HEK293 (cell line): ENCODE measurements at regions of chr9 and their contacts with region 1.

Region 1: GRCh38 chr9:8719833-8720486 is 920.4 kb upstream of the DMAC1 start:
- H3K4me3 ChIP-seq: no peak overlapping the region
- H3K27ac ChIP-seq: no peak overlapping the region
- H3K4me1 ChIP-seq: peaks cover 8% of the 10 kb centered on the region; the same call in 1 of the 2 replicates
- CTCF ChIP-seq: no peak

Region 2: DNA sequence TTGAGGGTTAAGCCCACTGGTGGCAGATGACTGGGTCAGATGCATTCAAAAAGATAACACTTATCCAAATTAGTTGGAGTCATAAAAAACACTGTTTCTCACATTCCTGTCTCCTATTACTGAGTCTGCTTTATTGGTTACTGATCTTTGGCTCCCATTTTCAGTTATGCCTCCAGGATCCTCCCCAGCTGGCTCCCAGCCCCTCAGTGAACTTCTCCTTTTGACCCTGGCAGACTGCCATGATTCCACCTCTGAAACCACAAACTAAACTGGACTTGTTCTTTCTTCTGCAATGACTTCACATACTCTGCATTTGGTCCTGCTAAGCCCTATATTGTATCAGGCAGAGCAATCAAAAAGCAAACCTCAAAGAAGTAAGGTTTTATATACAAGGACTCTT is 59.6 kb before region 1 on chr9:
- CTCF ChIA-PET with region 1: no interaction called
- POLR2A ChIA-PET with region 1: interaction called, 11 read pairs
- H3K4me3 ChIP-seq: no peak overlapping the region
- H3K27ac ChIP-seq: no peak overlapping the region
- H3K4me1 ChIP-seq: peaks cover 8% of the 10 kb centered on the region
- CTCF ChIP-seq: no peak